ENCODE measurements at regions of chr5 and their contacts with region 1.

Region 1: GRCh38 chr5:111229871-111230810 is 6.0 kb downstream of the CAMK4 start:
- DNase-seq: peak in 7 of 9 donors; percentile 52 to 86 (median 79)
- ATAC-seq: peak; percentile 73
- H3K4me3 ChIP-seq: peak overlapping the region; percentile 37
- H3K4me3 Mint-ChIP-seq: peak overlapping the region; percentile 79 to 98 (median 90)
- H3K27ac ChIP-seq: peak overlapping the region; percentile 93
- H3K27ac Mint-ChIP-seq: peak overlapping the region; percentile 93 to 100 (median 98)
- H3K4me1 ChIP-seq: peaks cover 64 to 83% of the 10 kb centered on the region in 2 donors
- H3K4me1 Mint-ChIP-seq: peaks cover 38 to 78% (median 73%) of the 10 kb centered on the region in 7 donors
- H3K27me3 ChIP-seq: no peaks in the 10 kb centered on the region
- H3K27me3 Mint-ChIP-seq: no peaks in the 10 kb centered on the region

Region 2: GRCh38 chr5:110751902-110752762 is 478.0 kb before region 1 on chr5:
- CTCF ChIA-PET with region 1: no interaction called
- POLR2A ChIA-PET with region 1: no interaction called
- intact Hi-C with region 1: loop called in 1 of 2 experiments (anchors 5 kb)
- DNase-seq: peak in 2 of 9 donors; percentile 8 to 30
- ATAC-seq: peak; percentile 82
- H3K4me3 ChIP-seq: no peak overlapping the region
- H3K4me3 Mint-ChIP-seq: peak overlapping the region in 1 of 10 donors; percentile 68
- H3K27ac ChIP-seq: no peak overlapping the region
- H3K27ac Mint-ChIP-seq: peak overlapping the region in 8 of 9 donors; percentile 5 to 84 (median 59)
- H3K4me1 ChIP-seq: peaks cover 0 to 12% of the 10 kb centered on the region in 2 donors
- H3K4me1 Mint-ChIP-seq: peaks cover 15 to 47% (median 34%) of the 10 kb centered on the region in 7 donors
- H3K27me3 ChIP-seq: no peaks in the 10 kb centered on the region
- H3K27me3 Mint-ChIP-seq: no peaks in the 10 kb centered on the region

Region 3: DNA sequence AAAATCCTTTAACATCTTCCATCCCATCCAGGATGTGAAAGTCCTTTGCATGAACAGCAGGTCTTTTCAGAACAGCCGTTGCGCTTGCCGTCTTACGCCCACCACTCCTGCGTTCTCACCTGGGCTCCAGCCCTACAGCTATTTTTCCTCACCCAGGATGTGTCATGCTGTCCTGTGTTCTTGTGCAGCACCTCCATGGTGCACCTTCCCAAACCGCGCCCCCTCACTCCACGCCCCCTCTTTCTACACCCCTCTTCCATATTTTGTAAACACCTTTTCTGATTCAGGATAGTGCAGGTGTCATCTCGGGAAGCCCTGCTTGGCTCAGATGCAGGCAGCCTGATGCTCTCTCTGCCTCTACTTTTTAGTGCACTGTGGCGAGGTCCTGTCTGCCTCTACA is 12.5 kb after region 1 on chr5:
- CTCF ChIA-PET with region 1: interaction called, 29 read pairs
- POLR2A ChIA-PET with region 1: interaction called, 207 read pairs
- intact Hi-C with region 1: loop called (anchors 1 kb)
- DNase-seq: no peak
- ATAC-seq: no peak
- H3K4me3 ChIP-seq: no peak overlapping the region
- H3K4me3 Mint-ChIP-seq: peak overlapping the region in 9 of 10 donors; percentile 17 to 81 (median 62)
- H3K27ac ChIP-seq: peak overlapping the region; percentile 50
- H3K27ac Mint-ChIP-seq: peak overlapping the region; percentile 38 to 98 (median 88)
- H3K4me1 ChIP-seq: peaks cover 15 to 69% of the 10 kb centered on the region in 2 donors
- H3K4me1 Mint-ChIP-seq: peaks cover 50 to 95% (median 90%) of the 10 kb centered on the region in 7 donors
- H3K27me3 ChIP-seq: no peaks in the 10 kb centered on the region
- H3K27me3 Mint-ChIP-seq: no peaks in the 10 kb centered on the region

Region 4: GRCh38 chr5:111248571-111248970 is 18.4 kb after region 1 on chr5:
- CTCF ChIA-PET with region 1: interaction called, 7 read pairs
- POLR2A ChIA-PET with region 1: interaction called, 35 read pairs
- intact Hi-C with region 1: loop called in 1 of 2 experiments (anchors 1 kb)
- DNase-seq: no peak
- ATAC-seq: no peak
- H3K4me3 ChIP-seq: no peak overlapping the region
- H3K4me3 Mint-ChIP-seq: peak overlapping the region in 9 of 10 donors; percentile 14 to 70 (median 41)
- H3K27ac ChIP-seq: peak overlapping the region; percentile 28
- H3K27ac Mint-ChIP-seq: peak overlapping the region in 8 of 9 donors; percentile 39 to 87 (median 80)
- H3K4me1 ChIP-seq: peaks cover 19 to 63% of the 10 kb centered on the region in 2 donors
- H3K4me1 Mint-ChIP-seq: peaks cover 48 to 90% (median 76%) of the 10 kb centered on the region in 7 donors
- H3K27me3 ChIP-seq: no peaks in the 10 kb centered on the region
- H3K27me3 Mint-ChIP-seq: no peaks in the 10 kb centered on the region

Region 5: GRCh38 chr5:111254613-111255012 is 24.5 kb after region 1 on chr5:
- CTCF ChIA-PET with region 1: interaction called, 7 read pairs
- POLR2A ChIA-PET with region 1: interaction called, 23 read pairs
- intact Hi-C with region 1: loop called (anchors 1 kb)
- DNase-seq: peak in 6 of 9 donors; percentile 36 to 90 (median 52)
- ATAC-seq: peak; percentile 93
- H3K4me3 ChIP-seq: no peak overlapping the region
- H3K4me3 Mint-ChIP-seq: peak overlapping the region; percentile 46 to 80 (median 70)
- H3K27ac ChIP-seq: peak overlapping the region; percentile 76
- H3K27ac Mint-ChIP-seq: peak overlapping the region; percentile 65 to 95 (median 85)
- H3K4me1 ChIP-seq: peaks cover 36 to 73% of the 10 kb centered on the region in 2 donors
- H3K4me1 Mint-ChIP-seq: peaks cover 0 to 78% (median 48%) of the 10 kb centered on the region in 7 donors
- H3K27me3 ChIP-seq: no peaks in the 10 kb centered on the region
- H3K27me3 Mint-ChIP-seq: no peaks in the 10 kb centered on the region

Region 6: DNA sequence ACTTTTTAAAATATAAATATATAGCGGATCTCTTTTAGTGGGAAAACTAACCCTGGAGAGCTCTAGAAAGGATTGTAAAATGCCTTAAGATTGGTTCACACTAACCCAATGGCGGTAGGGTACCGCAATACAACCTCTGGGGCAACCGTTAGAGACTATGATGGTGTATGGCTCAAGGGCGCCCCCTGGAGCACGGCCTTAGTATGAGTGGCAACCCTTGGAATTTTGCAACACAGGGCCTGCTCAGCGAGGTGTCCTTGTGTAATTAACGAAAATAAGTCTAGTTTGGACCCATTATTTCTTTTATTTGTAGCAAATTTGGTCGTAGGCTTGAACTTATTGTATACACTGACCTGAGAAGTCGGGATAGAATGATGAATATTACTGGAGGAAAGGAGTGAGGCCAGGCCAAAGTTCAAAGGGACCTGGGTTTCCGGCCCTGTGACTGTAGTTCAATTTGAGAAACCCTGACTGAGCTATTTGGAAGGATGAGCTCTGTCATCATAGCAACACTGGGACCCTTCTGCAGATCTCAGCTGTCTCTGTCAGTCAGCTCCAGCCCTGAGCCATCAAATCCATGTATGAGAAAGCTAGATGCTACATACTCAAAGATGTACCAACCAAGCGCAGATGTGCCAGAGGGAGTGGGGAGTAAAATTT is 48.8 kb after region 1 on chr5:
- CTCF ChIA-PET with region 1: interaction called, 65 read pairs
- POLR2A ChIA-PET with region 1: interaction called, 28 read pairs
- intact Hi-C with region 1: no loop called
- DNase-seq: peak; percentile 75 to 89 (median 82)
- ATAC-seq: peak; percentile 99
- H3K4me3 ChIP-seq: no peak overlapping the region
- H3K4me3 Mint-ChIP-seq: peak overlapping the region; percentile 2 to 83 (median 64)
- H3K27ac ChIP-seq: no peak overlapping the region
- H3K27ac Mint-ChIP-seq: peak overlapping the region in 7 of 9 donors; percentile 8 to 94 (median 77)
- H3K4me1 ChIP-seq: peaks cover 7 to 13% of the 10 kb centered on the region in 2 donors
- H3K4me1 Mint-ChIP-seq: peaks cover 29 to 94% (median 90%) of the 10 kb centered on the region in 7 donors
- H3K27me3 ChIP-seq: no peaks in the 10 kb centered on the region
- H3K27me3 Mint-ChIP-seq: no peaks in the 10 kb centered on the region

Measured in naive thymus-derived CD4-positive, alpha-beta T cell (primary cell).